ENCODE measurements at regions of chr20 and their contacts with region 1.

Region 1: DNA sequence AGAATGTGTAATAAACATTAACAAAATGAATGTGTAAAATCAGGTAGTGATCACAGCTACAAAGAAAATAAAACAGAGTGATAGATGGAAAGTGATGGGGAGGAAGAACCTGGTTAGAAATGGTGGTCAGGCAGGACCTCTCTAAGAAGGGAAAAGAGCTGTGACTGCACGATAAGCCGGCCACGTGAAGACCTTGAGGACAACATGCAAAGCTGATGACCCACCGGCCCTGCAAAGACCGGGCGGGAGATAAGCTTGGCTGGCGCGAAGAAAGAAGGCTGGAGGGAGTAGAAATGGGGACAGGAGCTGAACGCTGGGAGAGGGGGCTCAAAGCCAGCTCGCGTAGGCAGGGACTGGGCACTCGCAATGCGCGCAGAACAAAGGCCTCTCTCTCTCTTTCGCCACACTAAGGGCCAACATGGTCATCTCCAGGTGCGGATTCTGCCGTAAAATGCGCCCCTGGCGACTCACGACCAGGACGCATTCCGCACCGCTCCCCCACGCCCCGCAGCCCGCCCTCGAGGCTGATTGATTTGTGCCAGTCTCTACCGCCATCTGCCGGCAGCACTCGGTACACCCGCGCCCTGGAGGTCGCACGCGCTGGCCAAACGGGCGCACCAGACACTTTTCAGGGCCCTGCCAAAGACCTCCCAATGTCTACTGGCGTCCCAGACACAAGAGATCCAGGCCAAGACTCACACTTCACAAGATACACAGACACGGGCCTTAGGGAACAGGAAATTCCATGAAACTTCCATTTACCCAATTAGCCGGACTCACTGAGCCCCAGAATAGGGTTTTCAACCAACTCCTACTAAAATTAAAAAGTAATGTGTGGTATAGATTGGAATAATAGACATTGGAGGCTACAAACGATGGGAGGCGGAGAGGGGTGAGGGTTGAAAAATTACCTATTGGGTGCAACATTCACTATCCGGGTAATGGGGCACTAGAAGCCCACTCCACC is 9.4 kb downstream of the DEFB132 start:
- DNase-seq: peak; percentile 81
- H3K4me3 Mint-ChIP-seq: peak overlapping the region; percentile 80
- H3K27ac Mint-ChIP-seq: peak overlapping the region; percentile 71
- H3K4me1 Mint-ChIP-seq: peaks cover 12% of the 10 kb centered on the region
- H3K27me3 Mint-ChIP-seq: peaks cover 2% of the 10 kb centered on the region

Region 2: GRCh38 chr20:208942-209566 is 57.8 kb before region 1 on chr20:
- intact Hi-C with region 1: loop called (anchors 1 kb)
- DNase-seq: no peak
- H3K4me3 Mint-ChIP-seq: no peak overlapping the region
- H3K27ac Mint-ChIP-seq: no peak overlapping the region
- H3K4me1 Mint-ChIP-seq: peaks cover 3% of the 10 kb centered on the region
- H3K27me3 Mint-ChIP-seq: peaks cover 26% of the 10 kb centered on the region

Region 3: GRCh38 chr20:235891-236290 is 31.0 kb before region 1 on chr20:
- intact Hi-C with region 1: loop called (anchors 2 kb)
- DNase-seq: no peak
- H3K4me3 Mint-ChIP-seq: no peak overlapping the region
- H3K27ac Mint-ChIP-seq: no peak overlapping the region
- H3K4me1 Mint-ChIP-seq: peaks cover 13% of the 10 kb centered on the region
- H3K27me3 Mint-ChIP-seq: peaks cover 1% of the 10 kb centered on the region

Region 4: DNA sequence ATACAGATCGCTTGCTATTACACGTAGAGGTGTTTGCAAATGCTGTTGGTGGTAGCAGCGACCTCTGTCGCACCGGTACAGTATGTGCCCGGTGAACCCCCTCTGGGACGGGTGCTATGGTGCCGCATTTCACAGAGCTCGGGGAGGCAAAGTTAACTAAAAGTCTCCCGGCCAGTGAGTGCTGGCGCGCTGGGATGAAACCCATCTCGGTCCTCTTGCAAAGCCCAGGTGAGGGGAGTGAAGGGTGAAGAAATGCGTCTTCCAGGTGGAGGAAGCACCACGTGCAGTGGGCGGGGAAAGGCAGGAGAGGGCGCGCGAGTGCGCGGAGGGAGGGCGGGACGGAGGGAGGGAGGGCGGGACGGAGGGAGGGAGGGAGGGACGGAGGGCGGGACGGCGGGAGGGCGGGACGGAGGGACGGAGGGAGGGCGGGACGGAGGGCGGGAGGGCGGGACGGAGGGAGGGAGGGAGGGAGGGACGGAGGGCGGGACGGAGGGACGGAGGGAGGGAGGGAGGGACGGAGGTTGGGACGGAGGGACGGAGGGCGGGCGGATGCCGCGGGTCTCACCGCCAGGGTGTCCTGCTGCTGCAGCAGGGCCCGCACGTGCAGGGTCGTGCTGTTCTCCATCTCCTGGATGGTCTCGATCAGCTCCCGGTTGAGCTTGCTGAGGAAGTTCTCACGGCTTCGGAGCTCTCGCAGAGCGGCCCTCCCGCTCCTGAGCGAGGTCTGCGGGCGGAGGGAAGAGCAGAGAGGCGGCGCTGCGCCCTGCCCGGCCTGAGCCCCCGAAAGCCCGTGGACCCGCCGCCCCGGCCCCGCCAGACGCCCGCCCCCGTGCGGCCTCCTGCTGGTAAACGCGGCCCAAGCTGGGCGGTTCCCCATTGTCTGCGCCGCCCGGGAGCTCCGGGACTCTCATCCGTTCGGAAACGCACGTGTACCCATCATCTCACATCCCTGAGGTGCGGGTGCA is 12.0 kb after region 1 on chr20:
- intact Hi-C with region 1: no loop called
- DNase-seq: no peak
- H3K4me3 Mint-ChIP-seq: no peak overlapping the region
- H3K27ac Mint-ChIP-seq: no peak overlapping the region
- H3K4me1 Mint-ChIP-seq: no peaks in the 10 kb centered on the region
- H3K27me3 Mint-ChIP-seq: no peaks in the 10 kb centered on the region

Region 5: DNA sequence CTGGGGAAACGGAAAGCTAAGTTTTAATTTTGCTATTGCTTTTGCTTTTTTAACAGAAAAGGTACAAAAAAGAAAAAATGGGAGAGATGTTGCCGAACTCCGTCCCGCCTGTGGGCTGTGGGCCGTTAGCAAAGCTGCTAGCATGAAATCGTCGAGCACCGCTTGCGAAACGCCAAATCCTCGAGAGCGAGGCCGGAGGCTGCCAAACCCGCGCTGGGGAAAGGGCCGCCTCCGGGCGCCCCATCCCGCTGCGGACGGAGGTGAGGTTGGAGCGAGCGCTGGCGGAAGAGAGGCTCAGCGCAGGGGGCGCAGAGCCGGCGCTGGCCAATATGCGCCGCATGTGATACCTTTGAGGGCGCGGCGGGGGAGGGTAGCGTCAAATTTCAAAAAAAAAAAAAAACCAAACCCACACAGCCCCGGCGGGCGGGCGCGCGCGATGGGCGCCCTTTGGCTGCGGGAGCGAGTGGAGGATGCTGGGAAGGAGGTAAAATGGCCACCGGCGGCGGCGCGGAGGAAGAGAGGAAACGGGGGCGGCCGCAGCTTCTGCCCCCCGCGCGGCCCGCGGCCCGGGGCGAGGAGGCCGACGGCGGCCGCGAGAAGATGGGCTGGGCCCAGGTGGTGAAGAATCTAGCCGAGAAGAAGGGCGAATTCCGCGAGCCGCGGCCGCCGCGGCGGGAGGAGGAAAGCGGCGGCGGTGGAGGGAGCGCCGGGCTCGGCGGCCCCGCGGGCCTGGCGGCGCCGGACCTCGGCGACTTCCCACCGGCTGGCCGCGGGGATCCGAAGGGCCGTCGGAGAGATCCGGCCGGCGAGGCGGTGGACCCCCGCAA is 30.4 kb after region 1 on chr20 and contains the start of gene ZCCHC3:
- intact Hi-C with region 1: no loop called
- DNase-seq: peak; percentile 85
- H3K4me3 Mint-ChIP-seq: peak within 1 kb of the TSS; percentile 99
- H3K27ac Mint-ChIP-seq: peak within 1 kb of the TSS; percentile 99
- H3K4me1 Mint-ChIP-seq: peaks cover 38% of the 10 kb centered on the region
- H3K27me3 Mint-ChIP-seq: no peaks in the 10 kb centered on the region
- total RNA-seq, gene ZCCHC3: 26.9 and 27.6 TPM in 2 replicates

Region 6: GRCh38 chr20:330233-331149 is 63.6 kb after region 1 on chr20:
- intact Hi-C with region 1: loop called (anchors 2 kb)
- DNase-seq: peak; percentile 51
- H3K4me3 Mint-ChIP-seq: no peak overlapping the region
- H3K27ac Mint-ChIP-seq: no peak overlapping the region
- H3K4me1 Mint-ChIP-seq: peaks cover 19% of the 10 kb centered on the region
- H3K27me3 Mint-ChIP-seq: no peaks in the 10 kb centered on the region

Measured in activated T-helper 2 cell treated with anti-CD3 and anti-CD28 coated beads, Interferon-gamma antibody, Interleukin-2, Interleukin-4, amounts not matched to agents 10 μg/mL and 5 μg/mL and 100 μg/mL, durations not matched to agents 14 hours and 24 hours and 36 hours (primary cell).